Lower leg skin (tissue), 4 donors: ENCODE measurements at regions of chr1 and their contacts with region 1.

Region 1: GRCh38 chr1:41268154-41268770 is 26.2 kb upstream of the SCMH1 start:
- DNase-seq: peak; percentile 72 to 95
- H3K4me3 ChIP-seq: no peak overlapping the region
- CTCF ChIP-seq: peak in 1 of 3 donors; percentile 97
- POLR2A ChIP-seq: no peak

Region 2: DNA sequence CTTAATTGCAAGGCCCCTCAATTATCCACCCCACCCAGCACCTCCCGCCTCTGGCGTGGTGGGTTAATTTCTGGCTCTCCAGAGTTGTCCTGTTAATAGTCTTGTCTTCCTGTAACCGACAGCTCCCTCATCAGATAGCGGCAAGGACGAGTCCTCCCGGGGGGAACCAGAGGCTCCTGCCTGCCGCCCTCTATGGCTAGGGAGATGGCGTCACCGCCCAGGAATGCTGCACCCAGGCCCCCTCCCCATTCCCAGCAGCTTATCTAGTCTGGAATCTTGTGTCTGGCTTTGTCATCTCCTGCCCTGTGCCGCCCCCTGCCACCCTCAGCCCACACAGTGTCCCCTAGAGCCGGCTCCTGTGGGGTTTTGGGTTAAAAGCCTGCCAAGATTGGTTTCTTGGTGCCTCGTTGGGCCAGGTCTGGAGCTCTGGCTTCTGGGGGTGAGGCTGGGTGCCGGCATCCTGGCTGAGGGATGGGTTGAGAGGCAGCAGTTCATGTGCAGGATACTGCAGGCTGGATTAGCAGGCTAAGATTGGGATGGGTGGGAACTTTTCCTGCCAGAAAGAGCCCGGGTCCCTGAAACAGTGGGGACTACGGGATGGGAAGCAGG is 167.4 kb after region 1 on chr1:
- intact Hi-C with region 1: loop called (anchors 2 kb)
- DNase-seq: no peak
- H3K4me3 ChIP-seq: no peak overlapping the region
- CTCF ChIP-seq: no peak
- POLR2A ChIP-seq: no peak